ENCODE measurements at regions of chr1 and their contacts with region 1.

Region 1: DNA sequence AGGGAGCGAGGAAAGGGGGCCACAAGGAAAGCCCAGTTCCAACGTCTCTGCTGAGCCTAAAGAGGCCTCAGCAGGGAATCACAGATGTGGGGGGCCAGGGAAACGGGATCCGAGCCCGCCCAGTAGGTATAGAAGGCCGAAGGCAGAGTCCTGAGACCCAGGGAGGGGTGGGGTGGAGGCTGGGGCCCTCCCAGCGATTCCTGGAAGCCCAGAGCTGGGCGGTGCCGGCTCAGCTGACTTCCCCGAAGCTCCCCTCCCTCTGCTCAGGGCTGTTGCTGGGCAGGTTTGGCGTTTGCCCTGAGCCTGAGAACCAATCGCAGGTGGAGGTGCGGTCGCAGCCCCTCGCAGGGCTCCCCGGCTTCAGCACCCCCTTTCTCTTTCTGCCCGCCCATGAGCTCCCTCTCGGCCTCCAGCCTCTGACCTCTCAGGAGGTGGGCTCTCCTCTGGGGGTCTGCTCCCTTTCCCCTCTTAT is 12.8 kb downstream of the ADAMTSL4 start:
- DNase-seq: peak; percentile 93
- H3K4me3 Mint-ChIP-seq: peak overlapping the region; percentile 87
- H3K27ac Mint-ChIP-seq: peak overlapping the region; percentile 100
- H3K4me1 Mint-ChIP-seq: peaks cover 62% of the 10 kb centered on the region
- H3K27me3 Mint-ChIP-seq: no peaks in the 10 kb centered on the region

Region 2: GRCh38 chr1:150476754-150477153 is 85.3 kb before region 1 on chr1:
- CTCF ChIA-PET with region 1: no interaction called
- POLR2A ChIA-PET with region 1: no interaction called
- DNase-seq: no peak
- H3K4me3 Mint-ChIP-seq: no peak overlapping the region
- H3K27ac Mint-ChIP-seq: no peak overlapping the region
- H3K4me1 Mint-ChIP-seq: no peaks in the 10 kb centered on the region
- H3K27me3 Mint-ChIP-seq: peaks cover 2% of the 10 kb centered on the region

Region 3: GRCh38 chr1:150486964-150487762 is 74.8 kb before region 1 on chr1 and contains the start of gene TARS2:
- CTCF ChIA-PET with region 1: interaction called, 7 read pairs
- POLR2A ChIA-PET with region 1: interaction called, 10 read pairs
- DNase-seq: peak; percentile 96
- H3K4me3 Mint-ChIP-seq: peak within 1 kb of the TSS; percentile 83
- H3K27ac Mint-ChIP-seq: peak within 1 kb of the TSS; percentile 85
- H3K4me1 Mint-ChIP-seq: peaks cover 25% of the 10 kb centered on the region
- H3K27me3 Mint-ChIP-seq: no peaks in the 10 kb centered on the region
- total RNA-seq, gene TARS2: 37.2 to 38.8 TPM

Region 4: GRCh38 chr1:150548632-150549495 is 13.1 kb before region 1 on chr1 and contains the start of gene ADAMTSL4:
- CTCF ChIA-PET with region 1: interaction called, 23 read pairs
- POLR2A ChIA-PET with region 1: interaction called, 30 read pairs
- DNase-seq: peak; percentile 53
- H3K4me3 Mint-ChIP-seq: peak within 1 kb of the TSS; percentile 72
- H3K27ac Mint-ChIP-seq: peak within 1 kb of the TSS; percentile 16
- H3K4me1 Mint-ChIP-seq: peaks cover 39% of the 10 kb centered on the region
- H3K27me3 Mint-ChIP-seq: peaks cover 22% of the 10 kb centered on the region
- total RNA-seq, gene ADAMTSL4: 1.4 to 1.6 TPM

Region 5: DNA sequence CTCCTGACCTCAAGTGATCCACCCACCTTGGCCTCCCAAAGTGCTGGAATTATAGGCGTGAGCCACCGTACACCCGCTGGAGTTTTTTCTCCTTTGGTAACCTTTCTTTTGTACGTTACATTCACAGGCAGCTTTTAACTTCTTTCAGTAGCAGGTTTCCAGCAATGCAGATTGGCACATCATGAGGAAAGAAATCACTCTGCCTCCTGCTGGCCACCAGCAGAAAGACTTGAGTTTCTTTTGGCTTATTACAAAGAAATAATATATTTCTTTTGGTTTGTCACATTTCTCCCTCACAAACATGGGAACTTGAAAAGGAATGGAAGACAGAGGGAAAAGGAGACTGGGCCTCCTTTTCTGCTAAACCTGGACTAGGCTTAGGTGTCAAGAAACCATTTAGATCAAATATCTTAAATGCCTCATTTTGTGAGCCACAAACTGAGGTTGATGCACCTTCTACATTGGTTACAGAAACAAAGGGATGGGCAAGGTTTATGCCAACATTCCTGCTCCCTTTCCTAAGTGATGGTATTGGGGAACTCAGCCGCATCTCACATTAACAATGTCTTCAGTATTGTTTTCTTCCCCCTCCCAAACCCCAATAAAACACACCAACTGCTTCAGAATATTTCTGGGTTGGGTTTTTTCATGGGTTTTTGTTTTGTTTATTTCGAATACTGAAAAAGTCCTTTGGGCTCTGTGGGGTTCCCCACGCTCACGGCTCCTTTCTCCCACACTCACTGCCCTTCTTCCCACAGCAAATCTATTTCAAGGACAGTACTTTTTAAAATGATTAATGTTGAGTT is 59.7 kb after region 1 on chr1:
- CTCF ChIA-PET with region 1: interaction called, 264 read pairs
- POLR2A ChIA-PET with region 1: interaction called, 402 read pairs
- DNase-seq: peak; percentile 70
- H3K4me3 Mint-ChIP-seq: no peak overlapping the region
- H3K27ac Mint-ChIP-seq: peak overlapping the region; percentile 76
- H3K4me1 Mint-ChIP-seq: peaks cover 76% of the 10 kb centered on the region
- H3K27me3 Mint-ChIP-seq: no peaks in the 10 kb centered on the region

Region 6: GRCh38 chr1:150696590-150697524 is 134.8 kb after region 1 on chr1 and contains the start of gene GOLPH3L:
- CTCF ChIA-PET with region 1: interaction called, 17 read pairs
- POLR2A ChIA-PET with region 1: interaction called, 7 read pairs
- DNase-seq: peak; percentile 93
- H3K4me3 Mint-ChIP-seq: peak within 1 kb of the TSS; percentile 100
- H3K27ac Mint-ChIP-seq: peak within 1 kb of the TSS; percentile 82
- H3K4me1 Mint-ChIP-seq: peaks cover 23% of the 10 kb centered on the region
- H3K27me3 Mint-ChIP-seq: peaks cover 8% of the 10 kb centered on the region
- total RNA-seq, gene GOLPH3L: 24.8 to 26.5 TPM

Region 7: DNA sequence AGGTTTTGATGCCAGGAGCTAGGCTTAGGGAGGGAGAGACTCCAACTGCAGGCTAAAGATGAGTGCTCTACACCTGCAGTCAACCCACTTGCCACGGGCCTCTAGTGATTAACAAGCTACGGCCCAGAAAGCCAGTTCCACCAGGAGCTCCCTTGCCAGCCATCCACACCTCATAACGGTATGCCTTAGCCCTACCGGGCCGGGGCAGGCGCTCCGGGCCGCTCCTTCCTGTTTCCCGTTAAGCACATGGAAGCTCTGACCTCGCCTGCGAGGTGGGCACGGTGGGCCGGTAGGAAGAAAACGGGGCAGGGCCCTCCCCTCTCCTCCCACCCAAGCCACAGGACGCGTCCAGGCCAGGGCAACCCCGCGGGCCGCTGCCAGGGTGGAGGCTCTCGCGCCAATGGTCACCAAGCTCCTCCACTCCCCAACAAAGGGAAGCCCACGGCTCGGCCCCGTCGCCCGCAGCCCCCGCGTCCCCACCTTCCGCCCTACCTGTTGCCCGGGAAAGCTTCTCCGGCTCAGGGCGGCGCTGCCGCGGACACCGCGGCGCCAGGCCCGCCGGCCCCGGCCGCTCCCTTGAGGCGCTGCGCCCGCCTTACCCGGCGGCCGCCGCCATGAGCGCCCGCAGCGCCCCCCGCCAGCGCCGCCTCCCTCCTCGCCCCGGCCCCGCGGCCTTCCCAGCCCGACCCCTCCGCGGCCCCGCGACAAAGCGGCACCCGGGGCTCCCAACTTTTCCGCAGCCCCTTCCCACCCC is 412.0 kb after region 1 on chr1:
- CTCF ChIA-PET with region 1: interaction called, 3 read pairs
- POLR2A ChIA-PET with region 1: interaction called, 11 read pairs
- DNase-seq: peak; percentile 46
- H3K4me3 Mint-ChIP-seq: peak overlapping the region; percentile 86
- H3K27ac Mint-ChIP-seq: peak overlapping the region; percentile 74
- H3K4me1 Mint-ChIP-seq: peaks cover 67% of the 10 kb centered on the region
- H3K27me3 Mint-ChIP-seq: no peaks in the 10 kb centered on the region

Measured in activated CD4-positive, alpha-beta memory T cell treated with anti-CD3 and anti-CD28 coated beads, Interleukin-2, amount 10 ng/mL, durations not matched to agents 7 days and 5 days (primary cell).